Mucosa of descending colon (tissue), 3 donors: ENCODE measurements at regions of chr17 and their contacts with region 1.

Region 1: GRCh38 chr17:41738077-41738735 is 3.8 kb upstream of the HAP1 start:
- DNase-seq: peak; percentile 81 to 90 (median 89)
- ATAC-seq: peak; percentile 96
- H3K4me3 ChIP-seq: no peak overlapping the region
- H3K4me1 ChIP-seq: peaks cover 9% of the 10 kb centered on the region
- CTCF ChIP-seq: peak; percentile 94

Region 2: DNA sequence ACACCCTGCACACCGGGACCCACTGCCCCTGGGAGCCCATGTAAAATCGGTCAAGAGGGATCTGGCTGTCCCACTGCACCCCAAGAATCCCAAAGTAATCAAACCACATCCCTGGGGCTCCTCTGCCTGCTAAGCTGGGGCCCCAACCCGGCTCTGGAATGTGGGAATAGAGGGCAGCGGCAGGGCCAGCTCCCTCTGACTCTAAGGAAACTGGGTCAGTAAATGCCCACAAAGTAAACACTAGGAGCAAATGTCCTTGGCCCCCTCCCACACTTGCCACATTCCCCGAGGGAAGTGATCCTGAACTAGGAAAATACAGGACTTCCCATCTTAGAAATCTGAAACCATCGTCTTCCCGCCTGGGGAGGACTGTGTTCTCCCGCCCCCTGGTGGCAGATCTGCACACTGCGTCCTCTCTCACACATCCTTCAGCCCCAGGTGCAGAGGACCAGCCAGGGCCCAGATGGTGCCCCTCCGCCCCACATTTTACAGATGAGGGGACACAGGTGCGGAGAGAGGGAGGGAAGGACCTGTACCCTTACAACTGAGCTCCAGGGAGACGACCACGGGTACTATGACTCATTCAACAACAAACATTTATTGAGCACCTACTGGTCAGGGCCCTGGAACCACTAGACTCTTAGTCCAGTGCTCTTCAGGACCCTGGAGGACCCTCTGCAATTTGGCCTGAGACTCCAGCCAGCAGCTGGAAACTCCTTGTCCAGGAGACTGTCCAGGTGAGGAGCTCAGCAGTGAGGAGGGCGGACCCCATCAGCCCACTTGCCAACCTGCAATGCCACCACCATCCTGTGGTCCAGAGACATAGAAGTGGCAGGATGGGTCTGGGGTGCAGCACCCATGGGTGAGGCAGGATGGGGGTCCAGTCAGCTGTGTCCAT is 63.4 kb after region 1 on chr17:
- intact Hi-C with region 1: loop called (anchors 2 to 5 kb)
- DNase-seq: peak; percentile 82 to 95 (median 90)
- ATAC-seq: peak; percentile 78
- H3K4me3 ChIP-seq: no peak overlapping the region
- H3K4me1 ChIP-seq: peaks cover 23% of the 10 kb centered on the region
- CTCF ChIP-seq: peak; percentile 83

Region 3: GRCh38 chr17:41885733-41886132 is 147.5 kb after region 1 on chr17:
- intact Hi-C with region 1: loop called in 1 of 2 experiments (anchors 10 kb)
- DNase-seq: no peak
- ATAC-seq: no peak
- H3K4me3 ChIP-seq: no peak overlapping the region
- H3K4me1 ChIP-seq: no peaks in the 10 kb centered on the region
- CTCF ChIP-seq: no peak